MCF 10A (cell line): ENCODE measurements at regions of chr2 and their contacts with region 1.

Region 1: GRCh38 chr2:150487537-150488429 is at the start of gene RND3:
- DNase-seq: peak; percentile 99
- H3K4me3 Mint-ChIP-seq: peak within 1 kb of the TSS; percentile 98
- H3K27ac Mint-ChIP-seq: peak within 1 kb of the TSS; percentile 97
- H3K4me1 Mint-ChIP-seq: peaks cover 20% of the 10 kb centered on the region
- H3K27me3 Mint-ChIP-seq: no peaks in the 10 kb centered on the region
- CTCF ChIP-seq: peak; percentile 79
- total RNA-seq, gene RND3: 158 and 182 TPM in 2 replicates

Region 2: GRCh38 chr2:149597668-149598326 is 890.0 kb before region 1 on chr2:
- CTCF ChIA-PET with region 1: interaction called, 5 read pairs
- POLR2A ChIA-PET with region 1: interaction called, 9 read pairs
- intact Hi-C with region 1: loop called (anchors 1 kb)
- DNase-seq: peak; percentile 79
- H3K4me3 Mint-ChIP-seq: no peak overlapping the region
- H3K27ac Mint-ChIP-seq: no peak overlapping the region
- H3K4me1 Mint-ChIP-seq: peaks cover 12% of the 10 kb centered on the region
- H3K27me3 Mint-ChIP-seq: no peaks in the 10 kb centered on the region
- CTCF ChIP-seq: peak; percentile 57

Region 3: GRCh38 chr2:150133623-150134022 is 354.2 kb before region 1 on chr2:
- CTCF ChIA-PET with region 1: no interaction called
- POLR2A ChIA-PET with region 1: interaction called, 10 read pairs
- intact Hi-C with region 1: no loop called
- DNase-seq: peak; percentile 95
- H3K4me3 Mint-ChIP-seq: no peak overlapping the region
- H3K27ac Mint-ChIP-seq: peak overlapping the region; percentile 5
- H3K4me1 Mint-ChIP-seq: peaks cover 13% of the 10 kb centered on the region
- H3K27me3 Mint-ChIP-seq: no peaks in the 10 kb centered on the region
- CTCF ChIP-seq: no peak

Region 4: GRCh38 chr2:150271952-150272802 is 215.6 kb before region 1 on chr2:
- CTCF ChIA-PET with region 1: no interaction called
- POLR2A ChIA-PET with region 1: interaction called, 11 read pairs
- intact Hi-C with region 1: loop called (anchors 10 kb)
- DNase-seq: peak; percentile 25
- H3K4me3 Mint-ChIP-seq: no peak overlapping the region
- H3K27ac Mint-ChIP-seq: peak overlapping the region; percentile 50
- H3K4me1 Mint-ChIP-seq: peaks cover 6% of the 10 kb centered on the region
- H3K27me3 Mint-ChIP-seq: no peaks in the 10 kb centered on the region
- CTCF ChIP-seq: no peak

Region 5: DNA sequence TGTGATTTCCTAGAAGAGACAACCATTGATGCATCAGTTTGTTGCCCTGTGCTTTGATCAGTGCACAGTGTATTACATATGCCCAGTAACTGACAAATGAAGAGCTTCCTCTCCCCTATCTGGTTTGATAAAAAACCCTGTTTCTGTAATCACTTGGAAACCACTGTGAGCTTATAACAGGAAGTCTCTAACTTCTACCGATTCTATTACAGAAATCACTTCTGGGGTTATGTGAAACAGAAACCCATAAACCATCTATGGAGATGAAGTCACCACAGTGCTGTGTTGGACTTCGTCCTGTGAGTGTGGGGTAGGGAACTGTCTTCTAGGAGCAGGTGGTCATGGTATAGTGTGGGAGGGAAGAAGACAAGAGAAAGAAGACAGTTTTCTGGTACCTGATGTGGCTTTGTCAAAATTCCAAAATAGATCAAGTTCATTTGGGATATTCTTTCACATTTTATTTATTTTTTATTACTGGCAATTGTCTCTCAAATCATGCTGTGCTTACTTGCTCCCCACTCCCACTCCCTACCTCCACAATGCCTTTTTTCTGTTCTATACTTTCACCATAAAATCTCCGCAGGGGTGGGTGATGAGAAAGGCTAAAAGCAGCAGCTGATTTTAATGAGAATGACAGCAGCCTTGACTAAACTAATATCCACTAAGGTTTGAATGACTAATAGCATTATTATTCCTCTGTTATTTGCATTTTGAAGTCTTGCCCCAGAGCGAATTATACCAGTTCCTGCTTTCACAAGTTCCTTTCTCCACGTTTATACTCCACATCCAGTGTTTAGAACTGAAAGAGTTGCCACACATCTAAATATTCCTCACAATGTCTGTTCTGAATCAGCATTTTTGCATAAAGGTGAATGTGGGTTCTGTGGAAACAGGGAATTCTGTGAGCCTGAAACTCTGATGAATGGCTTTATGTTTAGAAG is 41.3 kb after region 1 on chr2:
- CTCF ChIA-PET with region 1: interaction called, 3 read pairs
- POLR2A ChIA-PET with region 1: interaction called, 67 read pairs
- intact Hi-C with region 1: no loop called
- DNase-seq: peak; percentile 73
- H3K4me3 Mint-ChIP-seq: peak overlapping the region; percentile 41
- H3K27ac Mint-ChIP-seq: peak overlapping the region; percentile 76
- H3K4me1 Mint-ChIP-seq: peaks cover 27% of the 10 kb centered on the region
- H3K27me3 Mint-ChIP-seq: no peaks in the 10 kb centered on the region
- CTCF ChIP-seq: no peak

Region 6: DNA sequence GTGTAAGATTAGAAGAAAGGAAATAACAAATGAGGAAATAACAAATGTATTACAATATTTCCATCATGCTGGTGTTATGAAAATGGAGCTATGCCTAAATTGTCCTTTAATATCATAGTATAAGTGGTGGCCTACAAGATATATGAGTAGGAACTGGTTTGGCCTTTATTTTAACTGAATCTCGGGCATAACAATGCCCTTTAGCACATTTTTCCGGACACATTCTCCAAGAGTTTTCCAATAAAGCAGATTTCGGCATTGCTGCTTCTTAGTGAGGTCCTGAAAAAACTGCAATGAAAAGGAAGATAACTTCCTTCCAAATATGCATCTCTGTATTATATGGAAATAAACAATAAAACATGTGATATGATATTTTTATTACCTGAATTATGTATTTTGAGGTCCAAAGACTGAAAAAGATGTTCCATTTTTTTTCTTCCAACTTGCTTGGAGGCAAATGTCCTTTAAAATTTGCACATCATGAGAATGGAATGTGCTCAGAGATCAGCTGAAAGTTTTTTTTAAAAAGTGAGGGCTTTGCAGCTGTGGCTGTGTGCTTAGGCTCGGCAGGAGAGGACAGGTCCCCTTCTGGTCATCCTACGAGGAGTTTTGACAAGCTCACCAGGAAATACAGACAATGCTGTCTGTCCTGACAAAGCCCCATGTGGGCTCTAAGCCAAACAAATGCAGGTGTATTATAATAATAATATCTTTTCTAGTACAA is 132.0 kb after region 1 on chr2:
- CTCF ChIA-PET with region 1: interaction called, 3 read pairs
- POLR2A ChIA-PET with region 1: interaction called, 12 read pairs
- intact Hi-C with region 1: no loop called
- DNase-seq: peak; percentile 53
- H3K4me3 Mint-ChIP-seq: no peak overlapping the region
- H3K27ac Mint-ChIP-seq: peak overlapping the region; percentile 84
- H3K4me1 Mint-ChIP-seq: peaks cover 19% of the 10 kb centered on the region
- H3K27me3 Mint-ChIP-seq: no peaks in the 10 kb centered on the region
- CTCF ChIP-seq: no peak

Region 7: GRCh38 chr2:151238527-151239487 is 751.0 kb after region 1 on chr2:
- CTCF ChIA-PET with region 1: interaction called, 11 read pairs
- POLR2A ChIA-PET with region 1: interaction called, 7 read pairs
- intact Hi-C with region 1: loop called (anchors 2 kb)
- DNase-seq: peak; percentile 78
- H3K4me3 Mint-ChIP-seq: no peak overlapping the region
- H3K27ac Mint-ChIP-seq: peak overlapping the region; percentile 40
- H3K4me1 Mint-ChIP-seq: peaks cover 16% of the 10 kb centered on the region
- H3K27me3 Mint-ChIP-seq: no peaks in the 10 kb centered on the region
- CTCF ChIP-seq: peak; percentile 91